HAP-1 (cell line): ENCODE measurements at regions of chr19 and their contacts with region 1.

Region 1: DNA sequence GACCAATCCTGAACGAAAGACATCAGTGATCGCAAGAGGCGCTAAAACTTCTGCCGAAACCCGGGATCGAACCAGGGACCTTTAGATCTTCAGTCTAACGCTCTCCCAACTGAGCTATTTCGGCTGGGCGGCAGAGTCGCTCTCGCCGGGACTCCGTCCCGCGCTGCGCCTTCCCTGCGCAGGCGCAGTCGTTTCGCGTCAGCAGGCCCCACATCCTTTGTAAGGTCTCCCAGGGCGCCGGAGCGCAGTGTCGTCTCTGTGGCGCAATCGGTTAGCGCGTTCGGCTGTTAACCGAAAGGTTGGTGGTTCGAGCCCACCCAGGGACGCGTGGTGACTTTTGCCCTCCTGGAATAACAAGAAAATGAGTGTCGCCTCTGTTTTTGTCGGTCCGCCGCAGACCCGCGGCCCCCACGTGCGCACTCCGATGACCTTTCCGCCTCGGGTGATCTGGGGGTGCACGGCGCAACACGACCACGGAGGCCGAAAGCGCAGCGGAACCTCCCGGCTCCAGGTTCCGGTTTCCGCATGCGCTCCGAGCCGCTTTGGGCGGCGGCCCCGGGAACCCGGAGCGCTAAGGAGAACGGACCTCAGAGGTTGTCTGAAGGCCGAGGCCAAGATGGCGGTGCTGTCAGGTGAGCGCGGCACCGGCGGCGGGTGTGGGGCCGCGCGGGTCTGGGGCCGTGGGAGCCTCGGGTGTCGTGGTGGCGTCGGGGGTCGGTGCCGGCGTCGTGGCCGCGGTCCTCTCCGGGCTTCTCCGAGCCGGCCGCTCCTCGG is at the start of gene NDUFS7:
- DNase-seq: peak; percentile 76 to 92
- H3K4me3 ChIP-seq: peak within 1 kb of the TSS; percentile 59
- H3K4me1 ChIP-seq: peaks cover 11% of the 10 kb centered on the region
- H3K27me3 ChIP-seq: no peaks in the 10 kb centered on the region

Region 2: DNA sequence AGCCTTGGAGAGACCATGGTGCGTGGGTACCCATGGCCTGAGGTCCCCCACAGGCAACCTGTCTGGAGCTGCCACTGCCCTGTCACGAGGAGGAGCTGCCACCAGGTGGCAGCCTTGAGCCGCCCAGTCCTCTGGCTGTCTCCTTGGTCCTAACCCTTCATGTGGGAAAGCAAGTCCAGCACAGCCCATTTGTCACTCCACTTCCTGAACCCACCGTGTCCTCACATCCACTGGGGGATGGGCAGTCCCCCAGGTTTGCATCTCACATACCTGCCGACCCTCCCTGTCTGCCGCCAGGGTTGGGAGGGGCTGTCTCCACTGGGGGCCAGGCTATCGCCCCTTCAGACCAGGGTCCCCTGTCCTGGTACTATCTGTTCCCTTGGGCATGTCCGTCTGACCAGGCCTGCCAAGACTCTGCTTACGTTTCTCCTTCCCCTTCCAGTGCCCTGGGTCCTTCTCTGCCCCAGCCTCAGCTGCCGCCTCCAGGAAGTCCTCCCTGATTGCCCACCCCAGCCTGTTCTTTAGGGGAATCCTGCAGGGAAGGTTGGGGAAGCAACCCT is 103.6 kb before region 1 on chr19:
- in situ Hi-C with region 1: loop called (anchors 5 kb)
- DNase-seq: peak; percentile 65 to 89
- H3K4me3 ChIP-seq: no peak overlapping the region
- H3K4me1 ChIP-seq: peaks cover 9% of the 10 kb centered on the region
- H3K27me3 ChIP-seq: no peaks in the 10 kb centered on the region

Region 3: DNA sequence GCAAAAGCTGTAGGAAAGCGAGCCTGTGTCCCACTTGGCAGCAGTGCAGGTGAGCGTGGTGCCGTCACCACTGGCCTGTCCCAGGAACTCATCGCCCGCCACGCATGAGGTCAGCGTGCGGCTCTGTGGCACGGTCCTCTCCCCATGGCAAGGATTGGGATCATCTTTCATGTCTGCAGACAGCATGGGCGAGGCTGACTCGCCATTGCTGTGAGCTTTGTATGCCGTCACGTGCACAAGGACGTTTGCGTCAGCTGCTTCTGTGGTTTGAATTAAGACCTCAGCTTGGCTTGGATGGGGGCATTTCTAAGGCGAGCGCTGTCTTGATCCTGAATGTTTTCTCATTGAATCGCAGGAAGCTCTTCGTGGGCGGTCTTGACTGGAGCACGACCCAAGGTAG is 33.6 kb after region 1 on chr19:
- in situ Hi-C with region 1: no loop called
- DNase-seq: no peak
- H3K4me3 ChIP-seq: no peak overlapping the region
- H3K4me1 ChIP-seq: peaks cover 9% of the 10 kb centered on the region; the same call in 1 of the 2 replicates
- H3K27me3 ChIP-seq: no peaks in the 10 kb centered on the region